ENCODE measurements at regions of chr6 and their contacts with region 1.

Region 1: DNA sequence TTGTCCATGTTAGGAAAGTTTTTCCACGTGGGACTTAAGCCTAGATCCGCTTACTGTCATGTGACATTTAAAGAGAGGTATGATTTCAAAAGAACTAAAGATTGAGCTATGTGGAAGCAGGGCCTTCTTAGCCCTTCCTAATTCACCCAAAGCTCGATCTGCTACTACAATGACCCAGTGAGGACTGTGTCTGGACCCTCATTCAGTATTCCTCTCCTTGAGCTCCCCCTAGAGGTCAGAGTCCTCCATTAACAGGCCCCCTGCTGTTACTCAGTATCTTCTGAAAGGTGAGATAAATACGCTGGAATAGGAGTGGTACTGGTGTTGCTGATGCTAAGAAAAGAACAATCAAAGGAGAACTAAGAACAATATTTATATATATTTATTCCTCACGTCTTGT is 414.0 kb downstream of the GJA1 start:
- ATAC-seq: peak; percentile 54 to 100 (median 77)
- H3K4me3 ChIP-seq: no peak overlapping the region
- H3K27ac ChIP-seq: no peak overlapping the region
- H3K4me1 ChIP-seq: no peaks in the 10 kb centered on the region

Region 2: GRCh38 chr6:121430514-121431460 is 418.7 kb before region 1 on chr6:
- in situ Hi-C with region 1: loop called in 3 of 9 experiments (anchors 10 to 25 kb)
- ATAC-seq: peak in 4 of 8 experiments; percentile 11 to 34 (median 22)
- H3K4me3 ChIP-seq: no peak overlapping the region
- H3K27ac ChIP-seq: no peak overlapping the region
- H3K4me1 ChIP-seq: no peaks in the 10 kb centered on the region

Region 3: DNA sequence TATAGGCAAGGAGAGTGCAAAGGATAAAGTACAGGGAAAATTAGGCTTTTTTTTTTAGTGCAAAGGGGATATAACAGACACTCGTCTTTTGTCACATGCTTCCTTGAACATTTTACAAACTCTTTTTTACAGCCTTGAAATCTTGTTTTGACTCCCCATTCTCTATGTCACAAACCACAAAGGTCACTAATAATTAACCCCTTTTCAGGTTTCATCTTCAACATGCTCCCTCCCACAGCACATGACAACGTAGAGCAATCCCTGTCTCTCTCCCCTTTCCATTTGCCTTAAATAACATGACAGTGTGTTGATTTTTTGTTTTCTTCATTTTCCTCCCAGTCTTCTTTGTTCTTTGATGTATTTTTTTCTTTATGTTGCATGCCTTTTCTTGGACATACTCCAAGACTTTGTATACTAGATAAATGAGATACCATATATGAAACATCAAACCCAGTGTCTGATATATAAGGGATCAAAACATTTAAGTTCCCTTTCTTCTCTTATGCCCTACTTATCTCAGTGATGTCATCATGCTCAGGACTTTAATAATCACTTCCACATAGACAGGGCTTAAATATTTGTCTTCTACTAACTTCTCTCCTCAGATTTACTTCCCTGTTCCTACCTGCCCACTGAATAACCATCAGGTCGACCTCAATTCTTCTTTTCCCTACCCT is 171.2 kb after region 1 on chr6:
- in situ Hi-C with region 1: loop called in 2 of 9 experiments (anchors 25 kb)
- ATAC-seq: no peak
- H3K4me3 ChIP-seq: no peak overlapping the region
- H3K27ac ChIP-seq: no peak overlapping the region
- H3K4me1 ChIP-seq: no peaks in the 10 kb centered on the region

Region 4: GRCh38 chr6:122033539-122034181 is 184.2 kb after region 1 on chr6:
- in situ Hi-C with region 1: loop called in 1 of 9 experiments (anchors 25 kb)
- ATAC-seq: peak; percentile 67 to 93 (median 80)
- H3K4me3 ChIP-seq: no peak overlapping the region
- H3K27ac ChIP-seq: no peak overlapping the region
- H3K4me1 ChIP-seq: no peaks in the 10 kb centered on the region

Region 5: DNA sequence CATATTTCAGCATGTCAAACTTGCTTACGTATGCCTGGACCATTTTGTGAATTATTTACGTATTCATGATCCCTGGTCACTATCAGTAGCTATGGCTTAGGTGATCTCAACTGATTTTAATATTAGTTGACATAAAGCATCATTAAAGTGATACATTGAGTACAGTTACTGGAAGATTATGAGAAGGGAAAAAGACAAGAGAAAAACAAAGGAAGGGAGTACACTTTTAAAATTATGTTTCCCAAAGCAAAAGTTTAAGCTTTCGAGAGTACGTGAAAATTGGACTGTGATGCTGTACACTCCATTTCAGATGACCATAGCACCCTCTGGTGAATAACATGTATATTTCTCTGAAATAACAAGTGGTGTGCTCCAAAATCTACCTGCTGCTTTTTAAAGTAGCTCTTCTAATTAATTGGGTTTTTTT is 334.9 kb after region 1 on chr6:
- in situ Hi-C with region 1: loop called in 1 of 9 experiments (anchors 25 kb)
- ATAC-seq: peak in 4 of 8 experiments; percentile 41 to 78 (median 66)
- H3K4me3 ChIP-seq: no peak overlapping the region
- H3K27ac ChIP-seq: no peak overlapping the region
- H3K4me1 ChIP-seq: no peaks in the 10 kb centered on the region

Region 6: DNA sequence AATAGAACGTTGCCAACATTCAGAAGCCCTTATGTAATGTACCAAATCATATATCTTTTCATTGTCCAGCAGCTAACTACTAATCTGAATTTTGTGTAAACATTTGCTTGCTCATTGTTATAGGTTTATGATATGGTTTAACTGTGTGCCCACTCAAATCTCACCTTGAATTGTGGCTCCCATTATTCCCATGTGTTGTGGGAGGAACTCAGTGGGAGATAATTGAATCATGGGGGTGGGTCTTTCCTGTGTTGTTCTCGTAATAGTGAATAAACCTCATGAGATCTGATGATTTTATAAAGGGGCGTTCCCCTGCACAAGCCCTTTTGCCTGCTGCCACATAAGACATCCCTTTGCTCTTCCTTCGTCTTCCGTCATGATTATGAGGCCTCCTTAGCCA is 1054.7 kb after region 1 on chr6:
- in situ Hi-C with region 1: no loop called
- ATAC-seq: no peak
- H3K4me3 ChIP-seq: no peak overlapping the region
- H3K27ac ChIP-seq: no peak overlapping the region
- H3K4me1 ChIP-seq: no peaks in the 10 kb centered on the region

Measured in motor neuron (in vitro differentiated cells).